Calu3 (cell line): ENCODE measurements at regions of chr3 and their contacts with region 1.

Region 1: GRCh38 chr3:12246497-12247163 is 42.2 kb upstream of the PPARG start:
- DNase-seq: no peak
- H3K4me3 Mint-ChIP-seq: no peak overlapping the region
- H3K27ac Mint-ChIP-seq: no peak overlapping the region
- H3K4me1 Mint-ChIP-seq: no peaks in the 10 kb centered on the region
- H3K27me3 Mint-ChIP-seq: peaks cover 25% of the 10 kb centered on the region
- CTCF ChIP-seq: no peak

Region 2: DNA sequence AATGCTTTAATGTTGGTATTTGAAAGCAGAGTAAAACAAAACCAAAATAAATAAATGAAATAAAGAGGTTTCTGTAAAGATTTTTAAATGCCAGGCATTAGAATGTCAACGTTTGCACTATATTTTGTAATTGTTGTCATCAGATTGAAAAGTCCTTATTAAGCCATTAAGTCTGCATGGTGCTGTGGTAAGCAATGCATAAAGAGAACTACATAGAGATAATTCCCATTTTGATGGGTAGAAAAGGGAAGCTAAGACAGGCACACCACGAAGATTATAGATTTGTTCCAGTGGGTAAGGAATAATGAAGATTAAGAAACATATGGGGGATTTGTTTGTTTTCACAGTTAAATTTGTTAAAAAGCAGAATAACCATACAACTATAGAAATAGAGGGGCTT is 10.3 kb before region 1 on chr3:
- CTCF ChIA-PET with region 1: interaction called, 12 read pairs
- intact Hi-C with region 1: no loop called
- DNase-seq: no peak
- H3K4me3 Mint-ChIP-seq: no peak overlapping the region
- H3K27ac Mint-ChIP-seq: no peak overlapping the region
- H3K4me1 Mint-ChIP-seq: no peaks in the 10 kb centered on the region
- H3K27me3 Mint-ChIP-seq: no peaks in the 10 kb centered on the region
- CTCF ChIP-seq: no peak